IMR-90 (cell line): ENCODE measurements at regions of chr9 and their contacts with region 1.

Region 1: DNA sequence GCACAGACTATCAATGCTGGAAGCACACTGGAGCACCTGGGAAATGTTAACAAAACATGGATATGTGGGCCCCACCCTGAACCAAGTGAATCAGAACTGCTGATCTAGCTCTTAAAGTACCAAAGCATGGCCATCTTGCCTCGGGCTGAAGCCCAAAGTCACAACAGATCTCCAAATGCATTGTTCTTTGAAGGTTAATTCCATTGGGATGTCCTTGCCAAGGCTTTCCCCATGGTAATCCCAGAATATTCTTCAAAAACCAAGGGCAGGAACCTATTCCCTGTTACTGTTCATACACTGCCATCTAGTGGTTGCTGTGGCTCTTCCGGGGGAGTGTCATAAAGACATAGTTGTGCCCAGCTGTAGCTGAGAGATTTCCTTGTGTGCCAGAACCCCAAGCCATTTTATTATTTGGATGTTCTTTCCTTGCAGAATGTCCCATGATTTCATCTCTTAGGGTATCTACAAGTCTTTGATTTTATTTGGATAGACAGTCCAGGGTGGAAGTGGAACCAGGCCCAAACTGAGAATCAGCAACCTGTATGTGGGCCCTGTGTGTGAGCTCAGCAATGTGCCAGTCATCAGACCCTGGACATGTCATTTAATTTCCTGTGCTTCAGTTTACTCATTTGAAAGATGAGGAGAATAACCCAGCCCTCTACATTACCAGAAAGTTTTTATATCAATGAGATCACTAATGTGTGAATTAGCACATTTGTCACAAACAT is 290.0 kb downstream of the ACTL7B start:
- DNase-seq: peak; percentile 88
- ATAC-seq: peak; percentile 94
- H3K4me3 ChIP-seq: no peak overlapping the region
- H3K27ac ChIP-seq: no peak overlapping the region
- H3K4me1 ChIP-seq: no peaks in the 10 kb centered on the region; the same call in 1 of the 2 replicates
- H3K27me3 ChIP-seq: no peaks in the 10 kb centered on the region
- CTCF ChIP-seq: peak; percentile 96
- POLR2A ChIP-seq: peak; percentile 69
- RAD21 ChIP-seq: peak; percentile 99

Region 2: GRCh38 chr9:107465467-107466451 is 1100.1 kb before region 1 on chr9:
- CTCF ChIA-PET with region 1: interaction called, 3 read pairs
- POLR2A ChIA-PET with region 1: no interaction called
- dilution Hi-C with region 1: no loop called
- in situ Hi-C with region 1: no loop called
- intact Hi-C with region 1: loop called (anchors 5 kb)
- DNase-seq: peak; percentile 33
- ATAC-seq: peak; percentile 99
- H3K4me3 ChIP-seq: peak overlapping the region; percentile 48
- H3K27ac ChIP-seq: no peak overlapping the region
- H3K4me1 ChIP-seq: no peaks in the 10 kb centered on the region
- H3K27me3 ChIP-seq: peaks cover 4% of the 10 kb centered on the region
- CTCF ChIP-seq: peak; percentile 83
- POLR2A ChIP-seq: no peak
- RAD21 ChIP-seq: peak; percentile 85

Region 3: DNA sequence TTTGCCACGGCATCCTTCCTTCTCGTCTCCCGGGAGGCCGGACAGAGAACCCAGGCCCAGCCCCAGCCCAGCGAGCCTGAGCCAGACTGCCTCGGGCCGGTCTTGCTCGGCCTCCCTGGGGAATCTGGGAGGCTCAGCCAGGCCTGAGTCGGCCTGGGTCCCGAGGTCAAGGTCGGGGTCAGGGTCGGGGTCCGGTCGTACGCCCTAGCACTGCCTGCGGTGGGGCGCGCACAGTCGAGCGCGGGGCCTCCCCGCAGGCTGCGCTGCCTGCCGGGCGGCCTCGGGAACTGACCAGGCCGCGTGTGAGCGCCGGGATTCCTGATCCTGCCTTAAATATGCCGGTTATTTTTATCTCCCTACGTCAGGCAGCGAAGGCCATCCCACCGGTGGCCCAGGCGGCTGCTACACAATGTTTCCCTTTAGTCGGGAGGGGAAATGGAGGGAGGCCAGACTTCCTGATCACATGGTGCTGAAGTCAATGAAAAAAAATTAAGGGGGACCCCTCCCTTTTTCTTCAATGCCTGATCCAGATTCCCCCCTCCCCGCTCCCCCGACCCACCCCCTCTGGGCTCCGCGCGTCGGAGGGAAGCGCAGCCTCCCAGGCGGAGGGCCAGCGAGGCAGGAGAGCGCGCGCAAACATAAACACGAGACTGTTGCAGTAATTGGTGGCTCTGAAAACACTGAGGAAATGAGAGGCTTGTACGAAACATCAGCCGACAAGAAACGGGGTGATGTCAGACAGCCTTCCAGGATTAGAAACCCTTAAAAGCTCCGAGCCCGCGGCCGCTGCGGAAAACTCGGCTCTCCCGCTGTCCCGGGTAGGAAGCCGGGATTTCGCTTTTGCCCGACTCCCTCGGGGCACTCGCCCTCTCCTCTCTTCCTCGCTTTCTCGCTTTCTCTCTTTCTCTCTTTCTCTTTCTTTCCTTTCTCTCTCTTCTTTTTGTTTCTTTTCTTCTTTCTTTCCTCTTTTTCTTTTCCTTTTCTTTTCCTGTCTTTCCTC is 928.1 kb before region 1 on chr9:
- CTCF ChIA-PET with region 1: no interaction called
- POLR2A ChIA-PET with region 1: no interaction called
- dilution Hi-C with region 1: no loop called
- in situ Hi-C with region 1: no loop called
- intact Hi-C with region 1: loop called (anchors 1 kb)
- DNase-seq: peak; percentile 98
- ATAC-seq: peak; percentile 90
- H3K4me3 ChIP-seq: peak overlapping the region; percentile 37
- H3K27ac ChIP-seq: peak overlapping the region; percentile 77
- H3K4me1 ChIP-seq: peaks cover 10% of the 10 kb centered on the region
- H3K27me3 ChIP-seq: no peaks in the 10 kb centered on the region
- CTCF ChIP-seq: peak; percentile 28; the same call in 1 of the 2 replicates
- POLR2A ChIP-seq: peak; percentile 91
- RAD21 ChIP-seq: peak; percentile 34

Region 4: GRCh38 chr9:108053555-108054061 is 512.2 kb before region 1 on chr9:
- CTCF ChIA-PET with region 1: no interaction called
- POLR2A ChIA-PET with region 1: no interaction called
- dilution Hi-C with region 1: no loop called
- in situ Hi-C with region 1: no loop called
- intact Hi-C with region 1: loop called (anchors 5 kb)
- DNase-seq: peak; percentile 80
- ATAC-seq: 0 out of 2 replicates have a peak, but pooled peaks have one; percentile 2
- H3K4me3 ChIP-seq: no peak overlapping the region
- H3K27ac ChIP-seq: peak overlapping the region; percentile 70; the same call in 1 of the 2 replicates
- H3K4me1 ChIP-seq: peaks cover 32% of the 10 kb centered on the region
- H3K27me3 ChIP-seq: no peaks in the 10 kb centered on the region
- CTCF ChIP-seq: no peak
- POLR2A ChIP-seq: no peak
- RAD21 ChIP-seq: no peak

Region 5: GRCh38 chr9:108282872-108283271 is 282.9 kb before region 1 on chr9:
- CTCF ChIA-PET with region 1: interaction called, 3 read pairs
- POLR2A ChIA-PET with region 1: no interaction called
- dilution Hi-C with region 1: no loop called
- in situ Hi-C with region 1: loop called (anchors 10 kb)
- intact Hi-C with region 1: no loop called
- DNase-seq: peak; percentile 8
- ATAC-seq: no peak
- H3K4me3 ChIP-seq: no peak overlapping the region
- H3K27ac ChIP-seq: no peak overlapping the region
- H3K4me1 ChIP-seq: no peaks in the 10 kb centered on the region
- H3K27me3 ChIP-seq: no peaks in the 10 kb centered on the region
- CTCF ChIP-seq: peak; percentile 30; the same call in 1 of the 2 replicates
- POLR2A ChIP-seq: no peak
- RAD21 ChIP-seq: peak; percentile 26

Region 6: GRCh38 chr9:108850293-108850897 is 284.6 kb after region 1 on chr9:
- CTCF ChIA-PET with region 1: no interaction called
- POLR2A ChIA-PET with region 1: no interaction called
- dilution Hi-C with region 1: no loop called
- in situ Hi-C with region 1: no loop called
- intact Hi-C with region 1: no loop called
- DNase-seq: peak; percentile 14
- ATAC-seq: 0 out of 2 replicates have a peak, but pooled peaks have one; percentile 51
- H3K4me3 ChIP-seq: no peak overlapping the region
- H3K27ac ChIP-seq: no peak overlapping the region
- H3K4me1 ChIP-seq: no peaks in the 10 kb centered on the region
- H3K27me3 ChIP-seq: peaks cover 6% of the 10 kb centered on the region
- CTCF ChIP-seq: peak; percentile 24
- POLR2A ChIP-seq: no peak
- RAD21 ChIP-seq: peak; percentile 30